ENCODE measurements at regions of chr16 and their contacts with region 1.

Region 1: DNA sequence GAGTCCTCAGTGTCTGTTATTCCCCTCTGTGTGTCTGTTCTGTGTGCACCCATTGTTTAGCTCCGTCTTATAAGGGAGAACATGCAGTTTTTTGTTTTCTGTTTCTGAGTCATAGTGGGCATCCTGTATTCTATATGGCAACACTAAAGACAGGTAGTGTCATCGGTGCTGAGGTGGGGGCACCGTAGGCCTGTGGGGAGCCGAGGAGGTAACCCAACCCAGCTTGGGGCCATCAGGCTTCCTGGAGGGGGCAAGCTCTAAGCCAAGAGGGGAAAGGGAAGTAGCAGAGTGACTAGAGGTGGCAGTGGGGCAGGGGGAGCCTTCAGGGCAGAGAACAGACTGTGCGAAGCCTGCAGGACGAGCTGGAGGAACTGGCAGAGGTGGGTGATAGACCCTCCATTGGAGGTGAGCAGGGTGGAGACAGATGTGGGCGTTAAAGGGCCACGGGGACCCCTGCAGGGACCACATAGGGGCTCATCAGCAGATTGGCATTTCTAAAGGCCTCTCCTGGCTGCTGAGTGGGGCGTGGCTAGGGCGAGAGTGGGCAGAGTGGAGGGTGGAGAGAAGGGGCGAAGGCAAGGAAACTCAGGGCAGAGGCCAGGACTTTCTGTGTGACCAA is 36.5 kb downstream of the CPNE2 start:
- DNase-seq: peak; percentile 36 to 87 (median 69)
- ATAC-seq: peak; percentile 76 to 87
- H3K4me3 Mint-ChIP-seq: peak overlapping the region; percentile 79 to 94 (median 88)
- H3K27ac Mint-ChIP-seq: peak overlapping the region; percentile 89 to 99 (median 97)
- H3K4me1 Mint-ChIP-seq: peaks cover 67 to 99% (median 90%) of the 10 kb centered on the region in 4 donors
- H3K27me3 Mint-ChIP-seq: no peaks in the 10 kb centered on the region

Region 2: DNA sequence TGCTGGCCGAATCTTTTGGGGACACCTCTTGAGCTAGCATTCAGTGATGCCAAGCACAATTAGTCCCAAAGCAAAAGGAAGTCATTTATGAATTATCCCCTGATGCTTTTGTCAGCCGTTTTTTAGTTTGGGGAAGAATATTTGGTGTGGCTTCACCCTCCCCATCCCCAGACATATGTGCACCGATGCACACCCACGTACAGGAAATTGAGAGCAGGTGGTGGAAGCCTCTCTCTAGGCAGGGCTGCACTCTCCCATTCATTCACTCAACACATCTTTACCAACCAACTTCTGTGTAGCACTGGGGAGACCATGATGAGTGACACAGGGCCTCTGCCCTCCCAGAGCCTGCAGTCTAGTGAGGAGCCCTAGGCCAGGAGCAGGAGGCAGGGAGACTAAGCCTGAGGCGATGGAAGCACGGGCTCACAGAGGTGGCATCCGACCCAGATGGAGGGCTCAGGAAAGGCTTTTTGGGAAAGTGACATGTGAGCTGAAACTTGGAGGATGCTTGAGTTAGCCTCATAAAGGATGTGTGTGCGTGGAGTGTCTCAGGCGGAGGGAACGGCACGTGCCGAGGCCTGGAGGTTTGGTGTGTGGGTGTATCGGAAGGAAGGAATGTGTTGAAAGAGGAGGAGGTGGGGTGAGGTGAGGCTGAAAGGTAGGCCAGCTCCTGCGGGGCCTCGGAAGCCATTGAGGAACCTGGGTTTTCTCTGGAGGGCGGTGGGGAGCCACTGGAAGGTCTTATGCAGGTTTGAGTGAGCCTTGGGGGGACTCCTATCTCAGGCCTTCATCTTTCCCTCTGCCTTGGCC is 13.1 kb after region 1 on chr16:
- POLR2A ChIA-PET with region 1: interaction called, 30 read pairs
- DNase-seq: peak in 5 of 10 donors; percentile 43 to 63 (median 52)
- ATAC-seq: peak; percentile 91 to 96
- H3K4me3 Mint-ChIP-seq: peak overlapping the region; percentile 37 to 90 (median 77)
- H3K27ac Mint-ChIP-seq: peak overlapping the region; percentile 89 to 98 (median 96)
- H3K4me1 Mint-ChIP-seq: peaks cover 38 to 86% (median 57%) of the 10 kb centered on the region in 4 donors
- H3K27me3 Mint-ChIP-seq: no peaks in the 10 kb centered on the region